ENCODE measurements at regions of chr13 and their contacts with region 1.

Region 1: GRCh38 chr13:43878892-43879754 is at the start of gene CCDC122:
- DNase-seq: peak; percentile 97 to 99 (median 98)
- H3K4me3 ChIP-seq: peak within 1 kb of the TSS; percentile 38 to 65 (median 46)
- H3K4me3 Mint-ChIP-seq: peak within 1 kb of the TSS; percentile 85 to 96
- H3K27ac ChIP-seq: peak within 1 kb of the TSS; percentile 97 to 98
- H3K27ac Mint-ChIP-seq: peak within 1 kb of the TSS; percentile 98 to 100 (median 99)
- H3K4me1 ChIP-seq: peaks cover 24 to 27% of the 10 kb centered on the region in 2 donors
- H3K4me1 Mint-ChIP-seq: peaks cover 31% of the 10 kb centered on the region
- H3K27me3 ChIP-seq: peaks cover 0 to 2% of the 10 kb centered on the region in 2 donors
- H3K27me3 Mint-ChIP-seq: peaks cover 4 to 6% (median 5%) of the 10 kb centered on the region in 3 donors
- CTCF ChIP-seq: no peak
- polyA plus RNA-seq, gene CCDC122: 0.16 to 8.0 (median 0.52) TPM

Region 2: DNA sequence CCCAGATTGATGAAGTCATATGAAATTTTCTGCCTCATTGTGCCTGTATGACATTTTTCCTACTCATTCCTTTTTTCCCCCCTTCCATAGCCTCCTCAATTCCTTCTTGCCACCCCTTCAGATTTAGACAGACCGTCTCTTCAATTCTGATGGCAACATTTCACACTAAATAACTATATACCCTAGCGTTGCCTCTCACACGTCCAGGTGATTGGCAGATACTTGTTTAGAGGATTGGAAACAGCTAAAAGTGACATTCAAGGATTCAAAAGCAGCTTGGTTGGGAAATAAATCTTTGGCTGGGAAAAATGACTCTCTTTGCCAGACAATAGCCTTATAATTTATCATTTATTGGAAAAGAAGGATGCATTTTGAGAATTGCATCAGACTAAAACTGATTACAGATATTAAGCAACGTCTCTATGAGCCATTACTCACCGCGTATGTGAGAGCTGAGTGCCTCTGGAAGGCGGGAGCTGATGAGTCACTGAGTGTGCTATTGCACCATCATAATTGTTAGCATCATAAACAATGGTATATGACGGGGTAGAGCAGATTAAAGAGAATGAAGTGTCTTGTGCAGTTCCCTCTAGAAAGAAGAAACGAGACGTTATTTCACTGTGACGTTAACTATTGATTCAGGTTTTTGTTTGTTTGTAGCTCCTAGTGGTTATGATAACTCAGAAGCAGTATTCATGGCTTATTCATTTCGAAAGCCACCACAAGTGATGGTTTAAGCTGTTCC is 1158.8 kb before region 1 on chr13:
- intact Hi-C with region 1: loop called in 1 of 2 experiments (anchors 10 kb)
- DNase-seq: peak; percentile 92 to 97 (median 93)
- H3K4me3 ChIP-seq: no peak overlapping the region
- H3K4me3 Mint-ChIP-seq: no peak overlapping the region
- H3K27ac ChIP-seq: peak overlapping the region in 1 of 2 donors; percentile 75
- H3K27ac Mint-ChIP-seq: peak overlapping the region; percentile 65 to 93 (median 89)
- H3K4me1 ChIP-seq: peaks cover 7 to 13% of the 10 kb centered on the region in 2 donors
- H3K4me1 Mint-ChIP-seq: peaks cover 10% of the 10 kb centered on the region
- H3K27me3 ChIP-seq: no peaks in the 10 kb centered on the region
- H3K27me3 Mint-ChIP-seq: peaks cover 0 to 3% (median 2%) of the 10 kb centered on the region in 3 donors
- CTCF ChIP-seq: no peak

Region 3: GRCh38 chr13:42969558-42970172 is 909.5 kb before region 1 on chr13:
- intact Hi-C with region 1: loop called in 1 of 2 experiments (anchors 10 kb)
- DNase-seq: peak; percentile 60 to 71 (median 69)
- H3K4me3 ChIP-seq: no peak overlapping the region
- H3K4me3 Mint-ChIP-seq: no peak overlapping the region
- H3K27ac ChIP-seq: no peak overlapping the region
- H3K27ac Mint-ChIP-seq: peak overlapping the region in 3 of 7 donors; percentile 49 to 55 (median 54)
- H3K4me1 ChIP-seq: peaks cover 3 to 10% of the 10 kb centered on the region in 2 donors
- H3K4me1 Mint-ChIP-seq: peaks cover 30% of the 10 kb centered on the region
- H3K27me3 ChIP-seq: no peaks in the 10 kb centered on the region
- H3K27me3 Mint-ChIP-seq: no peaks in the 10 kb centered on the region
- CTCF ChIP-seq: peak; percentile 88

Region 4: GRCh38 chr13:44141725-44142539 is 262.8 kb after region 1 on chr13:
- intact Hi-C with region 1: loop called in 1 of 2 experiments (anchors 5 kb)
- DNase-seq: peak; percentile 95 to 97 (median 96)
- H3K4me3 ChIP-seq: peak overlapping the region; percentile 62 to 97 (median 75)
- H3K4me3 Mint-ChIP-seq: peak overlapping the region; percentile 86 to 97
- H3K27ac ChIP-seq: peak overlapping the region; percentile 90
- H3K27ac Mint-ChIP-seq: peak overlapping the region; percentile 88 to 98 (median 96)
- H3K4me1 ChIP-seq: peaks cover 13 to 16% of the 10 kb centered on the region in 2 donors
- H3K4me1 Mint-ChIP-seq: peaks cover 21% of the 10 kb centered on the region
- H3K27me3 ChIP-seq: no peaks in the 10 kb centered on the region
- H3K27me3 Mint-ChIP-seq: peaks cover 1 to 4% (median 2%) of the 10 kb centered on the region in 3 donors
- CTCF ChIP-seq: no peak

Measured in CD14-positive monocyte (primary cell).